ENCODE measurements at regions of chr11 and their contacts with region 1.

Region 1: DNA sequence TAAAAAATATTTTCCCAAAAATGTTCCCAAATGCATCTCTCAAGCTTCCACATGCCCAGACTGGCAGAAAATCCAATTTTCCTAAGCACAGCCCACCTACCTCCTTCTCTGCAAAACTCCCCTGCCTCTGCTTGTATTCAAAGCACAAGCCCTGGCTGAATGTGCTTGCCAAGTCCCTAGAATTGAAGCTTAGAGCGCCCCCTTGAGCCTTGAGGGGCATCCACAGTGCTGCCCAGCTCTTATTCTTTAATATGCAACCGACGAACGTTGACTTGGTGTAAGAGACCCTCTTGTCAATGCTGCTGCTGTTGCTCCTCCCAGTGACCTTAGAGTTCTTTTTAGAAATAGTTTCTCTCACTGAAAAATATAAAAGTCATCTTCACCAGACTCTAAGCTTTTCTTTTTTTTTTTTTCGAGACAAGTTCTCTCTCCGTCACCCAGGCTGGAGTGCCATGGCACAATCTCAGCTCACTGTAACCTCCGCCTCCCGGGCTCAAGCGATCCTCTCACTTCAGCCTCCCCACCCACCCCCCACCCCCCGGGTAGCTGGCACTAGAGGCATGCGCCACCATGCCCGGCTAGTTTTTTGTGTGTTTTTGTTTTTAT is 63.5 kb upstream of the CAPRIN1 start:
- DNase-seq: peak; percentile 78
- ATAC-seq: peak; percentile 83
- H3K4me3 ChIP-seq: no peak overlapping the region
- H3K27ac ChIP-seq: no peak overlapping the region
- H3K4me1 ChIP-seq: no peaks in the 10 kb centered on the region
- H3K27me3 ChIP-seq: peaks cover 10% of the 10 kb centered on the region
- CTCF ChIP-seq: peak; percentile 78
- POLR2A ChIP-seq: no peak
- RAD21 ChIP-seq: peak; percentile 66

Region 2: GRCh38 chr11:33753304-33753967 is 234.6 kb before region 1 on chr11:
- CTCF ChIA-PET with region 1: no interaction called
- POLR2A ChIA-PET with region 1: no interaction called
- dilution Hi-C with region 1: no loop called
- in situ Hi-C with region 1: no loop called
- intact Hi-C with region 1: no loop called
- DNase-seq: peak; percentile 88
- ATAC-seq: peak; percentile 95
- H3K4me3 ChIP-seq: no peak overlapping the region
- H3K27ac ChIP-seq: no peak overlapping the region
- H3K4me1 ChIP-seq: peaks cover 3% of the 10 kb centered on the region; the same call in 1 of the 2 replicates
- H3K27me3 ChIP-seq: no peaks in the 10 kb centered on the region
- CTCF ChIP-seq: no peak
- POLR2A ChIP-seq: no peak
- RAD21 ChIP-seq: no peak

Region 3: DNA sequence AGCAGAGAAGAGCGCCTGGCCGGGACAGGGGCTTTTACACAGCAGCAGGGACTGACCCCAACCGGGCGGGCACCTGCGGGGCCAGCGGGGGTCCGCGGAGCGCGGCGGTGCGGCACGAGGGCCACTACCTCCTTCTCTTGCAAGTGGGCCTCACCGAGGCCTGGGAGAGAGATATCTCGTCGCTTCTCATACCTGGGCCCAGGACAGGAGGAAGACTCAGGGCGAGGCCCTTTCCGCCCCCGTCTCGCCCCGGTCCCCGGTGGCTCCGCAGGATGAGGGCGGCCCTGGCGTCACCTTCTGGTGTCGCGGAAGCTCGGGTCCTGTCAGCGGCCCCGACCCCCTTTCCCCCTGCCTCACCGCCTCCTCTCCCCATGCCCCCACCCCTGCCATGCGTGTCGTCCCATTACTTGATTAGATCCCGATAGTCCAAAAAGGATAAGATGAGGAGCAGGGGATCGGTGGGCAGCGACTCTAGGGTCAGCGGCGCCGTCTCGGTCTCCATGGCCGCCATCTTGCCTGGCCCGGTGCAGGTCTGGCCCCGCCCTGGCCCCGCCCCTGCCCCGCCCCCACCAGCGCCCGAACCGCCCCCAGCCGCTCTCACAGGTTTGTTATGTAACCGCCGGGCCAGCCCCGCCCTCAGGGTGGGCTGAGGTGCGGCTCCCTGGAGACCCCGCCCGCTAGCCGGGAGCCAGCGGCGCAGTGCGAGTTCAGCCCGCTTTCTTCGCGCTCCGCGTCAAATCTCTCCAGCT is 213.9 kb before region 1 on chr11 and contains the start of gene FBXO3:
- CTCF ChIA-PET with region 1: no interaction called
- POLR2A ChIA-PET with region 1: no interaction called
- dilution Hi-C with region 1: no loop called
- in situ Hi-C with region 1: no loop called
- intact Hi-C with region 1: no loop called
- DNase-seq: peak; percentile 58
- ATAC-seq: peak; percentile 92
- H3K4me3 ChIP-seq: peak within 1 kb of the TSS; percentile 82
- H3K27ac ChIP-seq: peak within 1 kb of the TSS; percentile 86
- H3K4me1 ChIP-seq: peaks cover 13% of the 10 kb centered on the region
- H3K27me3 ChIP-seq: no peaks in the 10 kb centered on the region
- CTCF ChIP-seq: no peak
- POLR2A ChIP-seq: peak; percentile 19; the same call in 1 of the 2 replicates
- RAD21 ChIP-seq: no peak
- total RNA-seq, gene FBXO3: 51.1 and 65.3 TPM in 2 replicates

Region 4: GRCh38 chr11:33835143-33835878 is 152.8 kb before region 1 on chr11:
- CTCF ChIA-PET with region 1: interaction called, 6 read pairs
- POLR2A ChIA-PET with region 1: no interaction called
- dilution Hi-C with region 1: no loop called
- in situ Hi-C with region 1: no loop called
- intact Hi-C with region 1: loop called (anchors 5 kb)
- DNase-seq: peak; percentile 76
- ATAC-seq: peak; percentile 91
- H3K4me3 ChIP-seq: no peak overlapping the region
- H3K27ac ChIP-seq: no peak overlapping the region
- H3K4me1 ChIP-seq: no peaks in the 10 kb centered on the region
- H3K27me3 ChIP-seq: peaks cover 22% of the 10 kb centered on the region
- CTCF ChIP-seq: peak; percentile 51
- POLR2A ChIP-seq: no peak
- RAD21 ChIP-seq: 0 out of 2 replicates have a peak, but pooled peaks have one; percentile 33

Region 5: DNA sequence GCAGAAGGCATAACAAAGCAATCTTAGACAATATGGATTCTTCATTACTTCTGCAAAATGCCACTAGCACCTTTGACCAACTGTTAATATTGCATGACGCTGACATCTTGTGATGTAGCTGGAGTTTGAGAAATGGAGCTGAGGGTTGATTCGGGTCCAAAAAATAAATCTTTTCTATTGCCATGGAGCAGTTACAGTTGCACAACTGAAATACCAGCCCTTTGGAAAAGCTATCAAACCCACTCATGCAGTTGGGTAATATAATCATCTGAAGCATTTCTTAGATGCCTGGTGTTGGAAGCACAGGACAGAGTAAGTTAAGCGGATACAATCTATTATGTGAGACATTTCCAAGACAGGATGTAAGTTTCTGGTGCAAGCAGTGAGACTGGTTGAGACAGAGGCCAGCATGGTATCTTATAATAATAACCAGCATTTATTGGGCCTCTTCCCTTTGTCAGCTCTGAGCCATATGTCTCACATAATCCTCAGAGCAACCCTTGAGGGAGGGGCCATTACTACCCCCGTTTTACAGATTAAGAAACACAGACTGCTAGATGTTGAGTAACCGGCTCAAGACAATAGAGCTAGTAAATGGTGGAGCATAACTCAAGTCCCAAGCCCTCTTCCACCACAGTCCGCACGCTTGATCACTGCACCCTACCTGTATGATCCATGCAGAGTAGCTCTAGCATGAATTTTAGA is 11.4 kb before region 1 on chr11:
- CTCF ChIA-PET with region 1: interaction called, 12 read pairs
- POLR2A ChIA-PET with region 1: no interaction called
- dilution Hi-C with region 1: no loop called
- in situ Hi-C with region 1: no loop called
- intact Hi-C with region 1: no loop called
- DNase-seq: peak; percentile 1
- ATAC-seq: peak; percentile 56; the same call in 1 of the 2 replicates
- H3K4me3 ChIP-seq: no peak overlapping the region
- H3K27ac ChIP-seq: no peak overlapping the region
- H3K4me1 ChIP-seq: no peaks in the 10 kb centered on the region; the same call in 1 of the 2 replicates
- H3K27me3 ChIP-seq: peaks cover 26% of the 10 kb centered on the region
- CTCF ChIP-seq: no peak
- POLR2A ChIP-seq: no peak
- RAD21 ChIP-seq: no peak

Measured in IMR-90 (cell line).